ENCODE measurements at regions of chr6 and their contacts with region 1.

Region 1: DNA sequence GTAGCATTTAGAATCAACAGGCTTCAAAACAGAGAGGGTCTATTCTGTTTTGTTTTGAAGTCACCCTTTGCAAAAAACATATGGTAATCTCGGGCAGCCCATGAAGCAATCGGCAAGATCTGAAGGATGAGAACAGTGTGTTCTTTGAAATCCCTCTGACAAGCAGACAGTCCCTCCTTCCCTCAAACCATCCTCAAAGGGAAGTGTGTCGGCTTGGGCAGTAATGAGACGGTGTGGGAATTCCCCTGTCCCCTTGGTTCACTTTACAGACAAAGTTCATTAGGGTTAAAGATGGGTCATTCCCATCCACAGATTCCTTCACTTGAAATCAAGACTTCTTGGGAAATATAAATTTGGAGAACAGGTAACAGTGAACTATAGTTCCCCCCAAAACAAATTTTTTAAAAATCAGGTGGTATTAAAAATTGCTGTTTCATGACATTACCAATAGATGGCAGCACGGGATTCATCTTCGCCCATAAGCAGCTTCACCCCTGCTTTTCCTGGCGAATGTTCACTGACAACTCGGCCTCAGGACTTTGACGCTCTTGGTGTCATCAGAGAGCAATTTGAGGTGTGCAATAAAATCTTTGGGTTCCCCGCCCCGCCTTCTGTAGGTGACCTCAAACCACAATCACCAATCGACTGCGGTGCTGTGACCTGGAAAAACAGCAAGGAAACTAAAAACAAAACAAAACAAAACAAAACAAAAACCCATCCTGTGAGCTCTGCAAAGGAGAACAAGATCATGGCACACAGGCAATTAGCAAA is 159.3 kb upstream of the TNFAIP3 start:
- DNase-seq: peak; percentile 87
- H3K4me3 ChIP-seq: no peak overlapping the region
- H3K27ac ChIP-seq: no peak overlapping the region
- H3K4me1 ChIP-seq: peaks cover 35% of the 10 kb centered on the region
- CTCF ChIP-seq: peak; percentile 91

Region 2: DNA sequence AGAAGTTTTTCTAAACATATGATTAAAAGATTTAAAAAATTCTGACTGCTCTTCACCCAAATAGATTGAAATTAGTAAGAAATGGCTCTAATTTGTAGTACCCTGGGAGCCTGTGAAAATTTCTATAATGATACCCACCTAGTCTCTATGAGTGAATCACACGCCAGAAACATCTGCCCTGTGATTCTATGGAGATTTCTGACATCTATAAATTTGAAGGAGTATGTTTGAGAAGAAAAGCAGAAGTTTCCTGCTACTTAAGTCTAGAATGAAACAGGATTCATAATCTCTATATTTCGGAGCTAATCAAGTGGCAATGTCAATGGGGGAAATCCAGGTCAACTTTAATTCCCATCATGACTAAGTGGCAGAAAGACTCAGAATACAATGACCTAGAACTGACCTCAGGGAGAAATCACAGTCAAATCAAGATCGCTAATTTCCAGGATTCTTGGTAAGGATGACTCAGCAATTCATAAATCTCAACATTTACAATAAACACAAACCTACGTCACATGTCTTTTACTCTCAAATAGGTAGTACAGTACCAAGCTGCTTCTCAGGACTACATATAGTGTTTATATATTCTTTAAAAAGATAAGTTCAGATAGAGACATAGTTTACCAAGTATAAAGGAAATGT is 26.9 kb before region 1 on chr6:
- CTCF ChIA-PET with region 1: no interaction called
- POLR2A ChIA-PET with region 1: no interaction called
- intact Hi-C with region 1: no loop called
- DNase-seq: no peak
- H3K4me3 ChIP-seq: no peak overlapping the region
- H3K27ac ChIP-seq: no peak overlapping the region
- H3K4me1 ChIP-seq: peaks cover 6% of the 10 kb centered on the region
- CTCF ChIP-seq: no peak

Region 3: GRCh38 chr6:137754366-137754765 is 46.6 kb after region 1 on chr6:
- CTCF ChIA-PET with region 1: no interaction called
- POLR2A ChIA-PET with region 1: no interaction called
- intact Hi-C with region 1: loop called (anchors 1 kb)
- DNase-seq: peak; percentile 57
- H3K4me3 ChIP-seq: peak overlapping the region; percentile 38
- H3K27ac ChIP-seq: peak overlapping the region; percentile 71
- H3K4me1 ChIP-seq: peaks cover 29% of the 10 kb centered on the region
- CTCF ChIP-seq: no peak

Region 4: GRCh38 chr6:137944793-137945498 is 237.2 kb after region 1 on chr6:
- CTCF ChIA-PET with region 1: interaction called, 4 read pairs
- POLR2A ChIA-PET with region 1: interaction called, 4 read pairs
- intact Hi-C with region 1: loop called (anchors 1 kb)
- DNase-seq: peak; percentile 57
- H3K4me3 ChIP-seq: no peak overlapping the region
- H3K27ac ChIP-seq: no peak overlapping the region
- H3K4me1 ChIP-seq: peaks cover 32% of the 10 kb centered on the region
- CTCF ChIP-seq: peak; percentile 93

Region 5: DNA sequence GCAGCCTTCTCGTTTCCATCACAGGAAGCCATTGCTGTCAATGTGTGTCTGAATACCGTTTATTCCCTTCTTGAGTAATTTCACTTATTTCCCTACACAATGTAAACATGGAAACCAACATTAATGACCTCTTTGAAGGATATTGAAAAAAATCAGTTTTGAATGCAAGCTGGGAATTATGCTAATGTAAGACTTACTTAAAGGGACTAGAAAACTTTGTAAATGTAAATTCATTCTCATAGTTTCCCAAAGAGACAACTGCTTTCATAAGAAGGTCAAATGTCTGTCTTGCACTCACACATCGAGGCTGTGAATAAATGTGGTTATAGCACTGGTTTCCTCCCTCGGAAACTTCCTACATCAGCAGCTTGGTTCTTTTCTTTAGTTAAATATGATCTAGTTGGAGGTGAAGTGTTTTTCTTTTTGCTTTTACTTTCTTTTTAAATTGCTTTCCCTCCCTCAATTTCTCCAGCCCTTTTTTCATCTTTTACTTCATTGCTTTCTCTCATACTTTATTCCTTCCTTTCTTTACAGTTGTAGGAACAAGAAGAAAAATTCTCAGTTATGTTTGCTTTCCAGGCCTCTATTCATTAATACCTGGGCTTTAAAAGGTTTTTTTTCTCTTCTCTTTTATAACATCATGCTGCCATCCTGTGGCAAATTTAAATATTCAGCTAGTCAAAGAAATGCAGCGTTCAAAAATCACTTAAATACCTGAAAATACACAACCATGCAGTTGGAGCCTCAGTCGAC is 267.6 kb after region 1 on chr6:
- CTCF ChIA-PET with region 1: interaction called, 3 read pairs
- POLR2A ChIA-PET with region 1: interaction called, 3 read pairs
- intact Hi-C with region 1: loop called (anchors 1 kb)
- DNase-seq: peak; percentile 62
- H3K4me3 ChIP-seq: no peak overlapping the region
- H3K27ac ChIP-seq: no peak overlapping the region
- H3K4me1 ChIP-seq: peaks cover 17% of the 10 kb centered on the region
- CTCF ChIP-seq: peak; percentile 84

Region 6: DNA sequence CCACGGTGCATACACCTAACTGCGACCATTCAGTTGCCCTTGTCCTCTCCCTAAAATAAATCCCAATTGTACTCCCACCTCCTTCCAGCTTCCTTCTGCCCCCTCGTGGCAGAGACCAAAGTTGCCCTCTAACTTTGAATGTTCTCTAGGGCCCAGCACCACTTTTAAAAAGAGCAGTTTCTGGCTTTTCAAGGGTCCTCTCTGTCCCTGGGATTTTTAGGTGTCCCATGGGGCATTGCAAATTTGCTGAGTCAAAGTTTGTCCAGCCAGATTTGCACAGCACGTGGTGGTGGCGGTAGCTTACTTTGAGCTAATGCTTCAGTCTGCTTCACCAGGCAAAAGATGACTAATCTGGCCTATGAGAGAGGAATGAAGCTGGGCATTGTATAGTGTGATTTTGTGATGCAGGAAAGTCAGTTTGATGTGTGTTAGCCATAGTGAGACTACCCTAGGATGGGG is 299.3 kb after region 1 on chr6:
- CTCF ChIA-PET with region 1: no interaction called
- POLR2A ChIA-PET with region 1: interaction called, 3 read pairs
- intact Hi-C with region 1: loop called (anchors 1 kb)
- DNase-seq: peak; percentile 32
- H3K4me3 ChIP-seq: no peak overlapping the region
- H3K27ac ChIP-seq: no peak overlapping the region
- H3K4me1 ChIP-seq: no peaks in the 10 kb centered on the region
- CTCF ChIP-seq: peak; percentile 92

Measured in OCI-LY7 (cell line).